ENCODE measurements at regions of chr6 and their contacts with region 1.

Region 1: DNA sequence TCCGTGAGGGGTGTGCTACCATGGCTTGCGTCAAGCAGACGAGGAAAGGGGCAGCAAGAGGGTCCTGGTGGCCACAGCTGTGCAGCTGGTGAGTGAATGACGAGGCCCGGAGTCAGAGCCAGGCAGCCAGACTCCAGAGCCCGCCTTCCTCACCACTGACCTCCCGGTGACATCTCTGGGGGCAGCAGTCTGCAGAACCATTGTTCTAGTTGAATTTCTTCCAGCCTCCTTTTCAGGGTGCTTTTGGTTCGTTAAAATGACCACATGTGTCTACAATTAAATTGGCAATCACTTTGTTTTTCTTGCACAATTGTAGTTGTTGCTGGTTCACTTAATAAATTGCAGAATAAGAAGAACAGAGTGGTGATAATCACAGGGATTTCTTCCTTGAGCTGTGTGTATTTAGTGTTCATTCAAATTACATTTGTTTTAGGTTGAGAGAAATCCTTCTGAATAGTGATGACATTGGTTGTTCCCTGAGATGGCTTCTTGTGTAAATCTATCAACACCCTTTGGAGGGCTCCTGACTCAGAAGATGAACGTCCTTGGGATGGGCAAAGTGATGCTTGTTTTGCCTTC is 96.4 kb downstream of the TULP4 start:
- DNase-seq: peak; percentile 95
- H3K4me3 ChIP-seq: no peak overlapping the region
- H3K27ac ChIP-seq: peak overlapping the region; percentile 94
- H3K4me1 ChIP-seq: peaks cover 54% of the 10 kb centered on the region
- H3K27me3 ChIP-seq: no peaks in the 10 kb centered on the region
- CTCF ChIP-seq: no peak
- POLR2A ChIP-seq: peak; percentile 61

Region 2: DNA sequence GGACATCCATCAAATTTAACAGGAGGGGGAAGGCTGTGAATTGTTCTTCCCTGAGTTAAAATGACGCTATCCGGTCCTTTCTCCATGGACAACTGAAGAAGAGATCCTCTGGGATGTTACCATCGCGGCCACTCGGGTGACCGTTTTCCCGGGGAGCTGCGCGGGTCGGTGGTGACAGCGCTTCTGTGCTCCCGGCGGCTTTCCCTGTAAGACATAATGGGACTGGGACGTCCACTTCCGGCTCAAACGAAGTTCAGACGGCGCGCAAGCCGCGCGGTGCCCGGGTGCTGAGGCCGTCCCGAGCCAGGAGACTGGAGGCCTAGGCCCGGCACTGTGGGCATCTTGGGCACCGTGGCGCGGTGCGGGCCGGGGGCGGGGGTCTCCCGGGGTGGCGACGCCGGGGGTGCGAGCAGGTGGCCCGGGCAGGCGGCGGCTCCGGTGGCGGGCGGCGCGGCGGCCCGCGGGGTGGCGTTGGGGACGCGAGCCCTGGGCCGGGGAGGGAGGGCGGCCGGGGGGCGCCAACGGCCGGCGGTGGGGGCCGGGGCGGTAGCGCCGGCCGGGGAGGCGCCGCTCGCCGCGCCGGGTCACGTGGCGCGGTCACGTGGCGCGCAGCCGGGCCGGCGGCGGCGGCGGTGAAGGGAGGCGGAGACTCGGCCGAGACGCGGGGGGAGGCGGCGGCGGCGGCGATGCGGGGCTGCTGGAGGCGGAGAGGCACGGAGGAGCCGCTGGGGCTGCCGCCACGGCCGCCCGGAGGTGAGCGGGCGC is 176.9 kb before region 1 on chr6:
- CTCF ChIA-PET with region 1: no interaction called
- POLR2A ChIA-PET with region 1: no interaction called
- dilution Hi-C with region 1: no loop called
- intact Hi-C with region 1: loop called (anchors 1 kb)
- DNase-seq: peak; percentile 53
- H3K4me3 ChIP-seq: peak overlapping the region; percentile 9 to 71 (median 43)
- H3K27ac ChIP-seq: peak overlapping the region; percentile 63
- H3K4me1 ChIP-seq: peaks cover 17% of the 10 kb centered on the region
- H3K27me3 ChIP-seq: no peaks in the 10 kb centered on the region
- CTCF ChIP-seq: no peak
- POLR2A ChIP-seq: no peak

Region 3: GRCh38 chr6:158361068-158361467 is 47.6 kb before region 1 on chr6:
- CTCF ChIA-PET with region 1: no interaction called
- POLR2A ChIA-PET with region 1: no interaction called
- dilution Hi-C with region 1: no loop called
- intact Hi-C with region 1: no loop called
- DNase-seq: no peak
- H3K4me3 ChIP-seq: no peak overlapping the region
- H3K27ac ChIP-seq: no peak overlapping the region
- H3K4me1 ChIP-seq: no peaks in the 10 kb centered on the region
- H3K27me3 ChIP-seq: no peaks in the 10 kb centered on the region
- CTCF ChIP-seq: no peak
- POLR2A ChIP-seq: no peak

Region 4: DNA sequence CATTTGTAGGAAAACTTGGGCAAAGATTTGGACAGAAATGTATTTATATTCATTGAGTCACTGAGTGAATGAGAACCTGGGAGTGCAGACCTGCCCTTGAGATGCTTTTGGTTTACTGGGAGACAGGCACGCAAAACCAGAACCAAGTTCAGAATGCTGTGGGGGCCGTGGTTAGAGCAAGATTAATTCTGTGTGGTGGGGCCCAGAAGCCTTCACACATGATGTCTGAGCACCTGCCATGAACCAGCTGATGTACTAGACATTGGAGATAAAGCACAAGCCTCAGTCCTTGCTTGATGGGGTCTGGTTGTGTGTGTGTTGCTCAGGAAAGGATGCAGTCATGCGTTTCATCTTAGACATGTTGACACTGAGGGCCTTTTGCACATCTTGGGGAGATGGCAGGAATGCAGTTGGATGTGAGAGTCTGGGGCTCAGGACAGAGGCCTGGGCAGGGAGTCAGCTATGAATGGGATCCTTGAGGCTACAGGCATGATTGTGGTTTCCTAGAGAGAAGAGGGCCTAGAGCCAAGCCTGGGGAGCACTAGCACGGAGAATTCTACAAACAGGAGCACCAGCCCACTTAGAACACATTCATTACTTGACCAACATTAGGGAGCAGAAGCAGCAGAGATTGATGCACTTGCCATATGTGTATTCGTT is 36.9 kb after region 1 on chr6:
- CTCF ChIA-PET with region 1: no interaction called
- POLR2A ChIA-PET with region 1: no interaction called
- dilution Hi-C with region 1: no loop called
- intact Hi-C with region 1: no loop called
- DNase-seq: no peak
- H3K4me3 ChIP-seq: no peak overlapping the region
- H3K27ac ChIP-seq: no peak overlapping the region
- H3K4me1 ChIP-seq: no peaks in the 10 kb centered on the region
- H3K27me3 ChIP-seq: no peaks in the 10 kb centered on the region
- CTCF ChIP-seq: no peak
- POLR2A ChIP-seq: no peak

Region 5: GRCh38 chr6:158460602-158461169 is 52.0 kb after region 1 on chr6:
- CTCF ChIA-PET with region 1: interaction called, 5 read pairs
- POLR2A ChIA-PET with region 1: no interaction called
- dilution Hi-C with region 1: no loop called
- intact Hi-C with region 1: loop called (anchors 1 kb)
- DNase-seq: peak; percentile 91
- H3K4me3 ChIP-seq: no peak overlapping the region
- H3K27ac ChIP-seq: peak overlapping the region; percentile 77
- H3K4me1 ChIP-seq: peaks cover 25% of the 10 kb centered on the region
- H3K27me3 ChIP-seq: no peaks in the 10 kb centered on the region
- CTCF ChIP-seq: no peak
- POLR2A ChIP-seq: no peak

Region 6: GRCh38 chr6:158481690-158482473 is 73.2 kb after region 1 on chr6:
- CTCF ChIA-PET with region 1: no interaction called
- POLR2A ChIA-PET with region 1: no interaction called
- dilution Hi-C with region 1: no loop called
- intact Hi-C with region 1: loop called (anchors 5 kb)
- DNase-seq: peak; percentile 86
- H3K4me3 ChIP-seq: no peak overlapping the region
- H3K27ac ChIP-seq: peak overlapping the region; percentile 66
- H3K4me1 ChIP-seq: peaks cover 17% of the 10 kb centered on the region
- H3K27me3 ChIP-seq: no peaks in the 10 kb centered on the region
- CTCF ChIP-seq: no peak
- POLR2A ChIP-seq: no peak

Region 7: GRCh38 chr6:158518191-158519127 is 109.8 kb after region 1 on chr6:
- CTCF ChIA-PET with region 1: interaction called, 3 read pairs
- POLR2A ChIA-PET with region 1: no interaction called
- dilution Hi-C with region 1: no loop called
- intact Hi-C with region 1: loop called (anchors 2 kb)
- DNase-seq: peak; percentile 71
- H3K4me3 ChIP-seq: peak overlapping the region in 2 of 3 experiments; percentile 17 to 23
- H3K27ac ChIP-seq: no peak overlapping the region
- H3K4me1 ChIP-seq: peaks cover 15% of the 10 kb centered on the region
- H3K27me3 ChIP-seq: no peaks in the 10 kb centered on the region
- CTCF ChIP-seq: peak; percentile 51 to 54
- POLR2A ChIP-seq: no peak

Region 8: GRCh38 chr6:158554611-158555361 is 146.1 kb after region 1 on chr6:
- CTCF ChIA-PET with region 1: no interaction called
- POLR2A ChIA-PET with region 1: interaction called, 3 read pairs
- dilution Hi-C with region 1: no loop called
- intact Hi-C with region 1: loop called (anchors 1 kb)
- DNase-seq: peak; percentile 81
- H3K4me3 ChIP-seq: peak overlapping the region in 1 of 3 experiments; percentile 11
- H3K27ac ChIP-seq: peak overlapping the region; percentile 81
- H3K4me1 ChIP-seq: peaks cover 35% of the 10 kb centered on the region
- H3K27me3 ChIP-seq: no peaks in the 10 kb centered on the region
- CTCF ChIP-seq: no peak
- POLR2A ChIP-seq: no peak

Region 9: DNA sequence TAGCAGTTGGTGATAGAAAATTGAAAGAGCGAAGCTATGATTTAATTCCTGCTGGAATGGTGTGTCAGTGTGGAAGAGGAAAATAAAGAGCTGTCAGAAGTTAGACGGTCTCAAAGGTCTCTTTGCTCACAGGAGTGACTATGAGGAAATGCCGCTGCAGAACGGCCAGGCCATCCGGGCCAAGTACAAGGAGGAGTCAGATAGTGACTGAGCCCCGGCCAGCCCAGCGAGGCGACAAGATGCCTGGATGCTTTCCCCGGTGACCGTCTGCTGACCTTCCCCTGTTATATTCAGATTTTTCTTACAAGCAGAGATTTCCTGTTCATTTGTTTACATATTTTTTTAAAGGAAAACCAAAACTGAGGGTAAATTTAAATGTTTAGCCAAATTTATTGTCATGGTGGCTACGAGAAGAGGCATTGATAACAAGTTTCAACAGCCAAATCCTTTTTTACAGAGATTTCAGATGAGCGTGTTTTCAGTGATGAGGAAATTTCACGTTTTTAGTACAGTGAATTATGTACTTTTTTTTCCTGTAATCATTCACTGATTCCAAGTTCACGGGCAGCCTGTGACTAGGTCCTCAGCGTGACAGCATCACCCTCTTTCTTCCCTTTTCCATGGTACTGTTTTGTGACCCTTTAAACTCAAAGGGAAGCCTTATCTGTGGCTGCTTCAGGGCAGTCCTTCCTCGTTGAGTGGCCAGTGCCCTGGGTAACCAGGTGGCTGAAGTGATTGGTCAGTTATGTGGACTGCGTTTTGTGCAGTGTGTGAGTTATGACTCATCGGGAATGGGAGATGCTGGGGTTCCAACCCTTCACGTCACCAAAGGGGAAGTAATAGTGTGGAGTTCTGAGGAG is 223.3 kb after region 1 on chr6:
- CTCF ChIA-PET with region 1: no interaction called
- POLR2A ChIA-PET with region 1: no interaction called
- dilution Hi-C with region 1: no loop called
- intact Hi-C with region 1: loop called (anchors 5 kb)
- DNase-seq: peak; percentile 97
- H3K4me3 ChIP-seq: peak overlapping the region in 1 of 3 experiments; percentile 25
- H3K27ac ChIP-seq: peak overlapping the region; percentile 90
- H3K4me1 ChIP-seq: peaks cover 27% of the 10 kb centered on the region
- H3K27me3 ChIP-seq: no peaks in the 10 kb centered on the region
- CTCF ChIP-seq: no peak
- POLR2A ChIP-seq: peak; percentile 45